ENCODE measurements at regions of chr16 and their contacts with region 1.

Region 1: DNA sequence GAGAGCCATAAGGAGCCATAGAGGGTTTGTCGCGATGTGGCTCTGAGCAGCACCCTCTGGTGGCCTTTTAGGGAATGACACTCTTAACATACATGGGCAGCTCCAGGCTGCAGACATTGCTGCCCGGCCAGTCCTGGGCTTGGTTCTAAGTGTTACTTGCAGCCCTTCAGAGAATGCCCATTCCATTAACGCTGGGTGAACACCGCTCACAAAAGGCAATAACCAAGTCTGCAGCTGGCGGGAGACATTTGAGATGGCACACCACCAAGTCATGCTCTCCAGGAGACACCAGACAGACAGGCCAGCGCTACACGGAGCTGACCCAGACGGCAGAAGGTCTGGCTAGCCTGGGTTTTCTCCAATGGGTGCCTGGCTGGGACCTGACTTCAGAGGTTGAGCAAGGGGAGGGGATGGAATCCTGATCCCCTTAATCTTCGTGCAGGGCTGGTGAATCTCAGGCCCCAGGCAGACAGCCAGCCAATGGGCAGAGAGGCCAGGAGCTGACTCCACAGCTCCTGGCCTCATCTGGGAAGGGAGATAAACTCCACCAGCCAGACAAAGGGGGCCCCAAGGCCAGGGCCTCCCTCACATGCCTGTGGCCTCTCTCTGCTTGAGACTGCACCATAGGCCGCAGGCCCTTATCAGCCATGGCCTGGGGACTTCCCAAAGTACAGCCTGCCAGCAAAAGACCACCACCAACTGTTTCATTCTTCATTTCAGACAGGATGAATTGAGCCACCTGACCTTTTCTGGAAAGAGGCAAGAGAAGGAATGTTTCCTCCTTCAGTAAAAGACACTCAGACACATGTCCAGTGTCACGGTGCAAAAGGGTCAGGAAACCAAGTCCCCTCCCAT is 58.8 kb downstream of the ZDHHC7 start:
- DNase-seq: peak; percentile 67 to 78
- ATAC-seq: peak; percentile 95 to 97
- H3K4me3 ChIP-seq: no peak overlapping the region
- H3K27ac ChIP-seq: peak overlapping the region in 1 of 4 donors; percentile 2
- H3K4me1 ChIP-seq: peaks cover 2 to 6% of the 10 kb centered on the region in 2 donors
- H3K27me3 ChIP-seq: no peaks in the 10 kb centered on the region
- CTCF ChIP-seq: peak; percentile 80 to 93 (median 92)
- POLR2A ChIP-seq: no peak

Region 2: DNA sequence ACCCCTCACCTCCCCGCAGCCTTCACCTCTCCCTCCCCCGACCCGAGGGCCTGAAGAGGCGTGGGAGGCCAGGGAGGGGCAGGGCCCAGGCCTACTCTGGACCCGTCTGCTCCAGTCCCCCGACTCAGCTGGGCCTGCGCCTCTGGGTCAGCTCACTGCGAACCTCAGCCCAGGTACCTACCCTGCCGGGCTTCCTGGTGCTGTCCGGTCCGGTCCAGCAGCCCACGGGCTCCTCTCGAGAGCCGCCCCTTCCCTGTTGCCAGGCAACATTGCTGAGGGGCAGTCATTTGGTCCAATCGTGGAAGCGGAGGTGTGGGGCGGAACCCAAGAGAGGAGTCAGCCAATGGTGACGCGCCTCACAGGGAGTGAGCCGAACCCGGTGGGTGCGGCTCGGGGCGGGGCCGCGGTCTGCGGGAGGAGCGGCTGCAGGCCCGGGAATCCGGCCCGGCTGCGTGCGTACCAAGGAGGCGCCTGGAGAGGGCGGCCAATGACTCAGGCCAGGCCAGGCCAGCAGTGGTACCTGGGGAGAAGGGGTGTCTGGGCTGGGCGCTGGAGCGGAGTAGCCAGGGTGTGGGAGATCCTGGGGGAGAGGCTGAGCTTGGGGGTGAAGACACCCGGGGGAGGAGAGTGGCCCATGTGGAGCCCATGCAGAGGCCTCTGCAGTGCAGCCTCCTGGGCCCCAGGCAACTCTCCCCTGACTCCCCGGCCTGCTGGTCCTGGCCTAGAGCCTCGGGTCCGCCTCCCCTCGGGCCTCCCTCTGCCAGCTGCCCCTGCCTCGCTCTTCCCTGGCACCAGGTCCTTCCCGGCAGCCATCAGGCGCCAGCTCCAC is 447.9 kb before region 1 on chr16 and contains the start of gene MEAK7:
- in situ Hi-C with region 1: loop called in 1 of 4 experiments (anchors 25 kb)
- intact Hi-C with region 1: no loop called
- DNase-seq: peak; percentile 97 to 98
- ATAC-seq: peak; percentile 97 to 98
- H3K4me3 ChIP-seq: peak within 1 kb of the TSS; percentile 79 to 95 (median 90)
- H3K27ac ChIP-seq: peak within 1 kb of the TSS; percentile 89 to 94 (median 92)
- H3K4me1 ChIP-seq: peaks cover 14 to 27% of the 10 kb centered on the region in 2 donors
- H3K27me3 ChIP-seq: no peaks in the 10 kb centered on the region
- CTCF ChIP-seq: no peak
- POLR2A ChIP-seq: peak; percentile 75 to 76
- total RNA-seq, gene MEAK7: 2.6 to 7.1 (median 5.0) TPM

Region 3: DNA sequence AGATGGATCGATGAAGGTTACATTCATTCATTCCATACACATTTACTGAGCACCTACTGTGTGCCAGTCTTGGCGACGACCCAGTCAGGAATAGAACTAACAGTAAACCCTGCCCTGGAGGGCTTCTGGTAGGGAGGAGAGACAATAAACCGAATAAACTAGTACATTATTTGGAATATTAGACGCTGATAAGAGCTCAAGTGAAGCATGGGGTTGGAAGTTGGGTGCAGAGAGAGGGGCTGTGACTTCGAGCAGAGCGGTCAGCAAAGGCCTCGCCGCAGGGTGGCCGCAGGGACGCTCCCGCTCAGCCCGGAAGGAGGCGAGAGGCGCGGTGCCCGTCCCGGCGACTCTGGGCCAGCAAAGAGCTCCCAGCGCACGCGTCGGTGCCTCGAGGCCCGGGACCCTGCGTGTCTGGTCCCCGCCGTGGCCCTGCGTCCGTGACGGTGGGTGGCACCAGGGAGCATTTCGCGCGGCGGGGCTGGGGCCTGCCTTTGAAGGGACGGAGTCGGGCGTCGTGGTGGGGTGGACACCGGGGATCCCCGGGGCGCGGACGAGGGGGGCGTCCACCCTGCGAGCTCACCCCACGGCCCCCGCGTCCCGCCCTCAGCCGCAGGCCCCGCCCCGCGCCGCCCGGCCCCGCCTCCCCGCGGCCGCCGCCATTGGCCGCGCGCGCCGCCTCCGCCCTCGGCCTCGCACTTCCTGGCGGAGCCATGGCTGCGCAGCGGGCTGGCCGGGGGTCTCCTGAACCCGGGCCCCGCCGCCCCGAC is 304.6 kb before region 1 on chr16 and contains the start of gene KLHL36:
- in situ Hi-C with region 1: loop called in 1 of 4 experiments (anchors 25 kb)
- intact Hi-C with region 1: no loop called
- DNase-seq: peak in 1 of 2 donors; percentile 36
- ATAC-seq: peak; percentile 86
- H3K4me3 ChIP-seq: peak within 1 kb of the TSS; percentile 64 to 99 (median 83)
- H3K27ac ChIP-seq: peak within 1 kb of the TSS; percentile 66 to 81 (median 76)
- H3K4me1 ChIP-seq: peaks cover 13 to 16% of the 10 kb centered on the region in 2 donors
- H3K27me3 ChIP-seq: no peaks in the 10 kb centered on the region
- CTCF ChIP-seq: no peak
- POLR2A ChIP-seq: peak in 1 of 2 donors; percentile 57
- total RNA-seq, gene KLHL36: 15.6 to 33.9 (median 18.2) TPM

Region 4: DNA sequence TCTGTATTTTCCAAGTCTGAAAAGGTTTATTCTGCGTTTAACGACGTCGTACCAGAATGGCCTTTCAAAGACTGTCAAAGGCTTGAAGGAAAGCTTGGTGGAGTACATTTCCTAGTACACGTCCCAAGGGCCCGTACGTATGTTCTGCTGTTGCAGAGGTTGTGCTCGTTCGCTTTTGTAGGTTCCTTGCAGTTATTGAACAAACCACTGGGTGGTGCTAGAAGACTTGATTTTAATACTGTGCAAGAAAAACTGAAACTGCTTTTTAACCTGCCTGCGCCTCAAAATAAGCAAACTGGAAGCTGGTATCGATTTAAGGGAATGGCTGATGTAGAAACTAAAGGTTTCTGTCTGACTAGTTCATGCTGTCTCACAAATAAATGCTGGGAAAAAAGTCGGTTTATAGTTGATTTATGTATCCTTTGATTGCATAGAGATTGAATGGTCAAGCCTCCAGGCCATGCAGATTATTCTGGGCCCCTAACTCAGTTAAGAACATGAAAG is 198.2 kb before region 1 on chr16:
- in situ Hi-C with region 1: no loop called
- intact Hi-C with region 1: loop called (anchors 1 kb)
- DNase-seq: peak; percentile 42 to 64
- ATAC-seq: peak; percentile 63 to 87
- H3K4me3 ChIP-seq: no peak overlapping the region
- H3K27ac ChIP-seq: no peak overlapping the region
- H3K4me1 ChIP-seq: peaks cover 28 to 37% of the 10 kb centered on the region in 2 donors
- H3K27me3 ChIP-seq: no peaks in the 10 kb centered on the region
- CTCF ChIP-seq: peak; percentile 72 to 84 (median 82)
- POLR2A ChIP-seq: no peak

Region 5: GRCh38 chr16:84851192-84852127 is 101.1 kb before region 1 on chr16:
- in situ Hi-C with region 1: loop called in 1 of 4 experiments (anchors 25 kb)
- intact Hi-C with region 1: no loop called
- DNase-seq: no peak
- ATAC-seq: no peak
- H3K4me3 ChIP-seq: no peak overlapping the region
- H3K27ac ChIP-seq: no peak overlapping the region
- H3K4me1 ChIP-seq: no peaks in the 10 kb centered on the region
- H3K27me3 ChIP-seq: no peaks in the 10 kb centered on the region
- CTCF ChIP-seq: no peak
- POLR2A ChIP-seq: no peak

Region 6: GRCh38 chr16:84925092-84925772 is 27.3 kb before region 1 on chr16:
- in situ Hi-C with region 1: no loop called
- intact Hi-C with region 1: loop called (anchors 1 kb)
- DNase-seq: peak; percentile 33 to 55
- ATAC-seq: peak in 1 of 2 donors; percentile 36
- H3K4me3 ChIP-seq: no peak overlapping the region
- H3K27ac ChIP-seq: peak overlapping the region in 3 of 4 donors; percentile 8 to 71 (median 52)
- H3K4me1 ChIP-seq: peaks cover 33 to 42% of the 10 kb centered on the region in 2 donors
- H3K27me3 ChIP-seq: no peaks in the 10 kb centered on the region
- CTCF ChIP-seq: peak; percentile 81 to 95 (median 94)
- POLR2A ChIP-seq: no peak

Region 7: DNA sequence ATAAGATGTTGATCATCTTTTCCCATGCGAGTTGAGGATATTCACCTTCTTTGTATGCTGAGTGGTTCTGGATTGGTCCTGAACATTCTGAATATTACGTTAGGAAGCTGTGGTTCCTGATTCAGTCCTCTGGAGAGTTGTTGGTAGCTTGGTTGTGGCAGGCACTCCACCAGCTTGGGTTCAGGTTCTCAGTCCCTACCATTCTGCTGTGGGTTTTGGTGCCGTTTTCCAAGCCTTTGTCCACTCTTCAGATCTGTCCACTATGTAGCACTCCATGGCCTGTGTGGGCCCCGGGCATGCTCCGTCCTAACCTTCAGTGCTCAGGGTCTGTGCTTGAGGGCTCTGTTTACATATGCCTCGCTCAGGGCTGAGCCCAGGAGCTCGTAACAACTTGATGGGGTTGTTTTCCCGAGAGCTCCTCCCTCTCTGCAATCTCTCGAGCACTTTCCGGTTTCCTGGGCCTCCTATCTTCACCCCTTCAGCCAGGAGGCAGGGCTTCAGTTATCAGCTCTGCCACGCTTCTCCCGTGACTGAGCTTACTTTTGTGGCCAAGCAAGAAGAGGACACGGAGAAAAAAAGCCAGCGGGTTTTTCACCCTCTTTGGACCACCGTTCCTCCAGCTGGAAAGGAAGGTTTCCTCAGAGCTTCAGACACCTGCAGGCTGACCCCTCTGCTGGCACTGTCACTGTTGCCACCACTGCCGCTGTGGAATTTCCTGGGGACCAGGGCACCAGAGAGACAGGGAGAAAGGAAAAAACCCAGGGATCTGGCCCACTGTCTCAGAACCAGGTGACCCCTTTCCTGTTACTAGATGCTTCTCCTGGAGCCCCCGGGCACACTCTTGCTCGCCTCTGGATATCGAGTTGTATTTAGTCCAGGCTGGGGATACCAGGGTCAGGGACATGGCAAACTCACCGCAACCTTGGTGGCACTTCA is 94.6 kb after region 1 on chr16:
- in situ Hi-C with region 1: no loop called
- intact Hi-C with region 1: no loop called
- DNase-seq: no peak
- ATAC-seq: no peak
- H3K4me3 ChIP-seq: no peak overlapping the region
- H3K27ac ChIP-seq: no peak overlapping the region
- H3K4me1 ChIP-seq: peaks cover under 1 to 16% of the 10 kb centered on the region in 2 donors
- H3K27me3 ChIP-seq: no peaks in the 10 kb centered on the region
- CTCF ChIP-seq: no peak
- POLR2A ChIP-seq: no peak

Measured in gastrocnemius medialis (tissue), 4 donors.